A673 (cell line): ENCODE measurements at regions of chr15 and their contacts with region 1.

Region 1: DNA sequence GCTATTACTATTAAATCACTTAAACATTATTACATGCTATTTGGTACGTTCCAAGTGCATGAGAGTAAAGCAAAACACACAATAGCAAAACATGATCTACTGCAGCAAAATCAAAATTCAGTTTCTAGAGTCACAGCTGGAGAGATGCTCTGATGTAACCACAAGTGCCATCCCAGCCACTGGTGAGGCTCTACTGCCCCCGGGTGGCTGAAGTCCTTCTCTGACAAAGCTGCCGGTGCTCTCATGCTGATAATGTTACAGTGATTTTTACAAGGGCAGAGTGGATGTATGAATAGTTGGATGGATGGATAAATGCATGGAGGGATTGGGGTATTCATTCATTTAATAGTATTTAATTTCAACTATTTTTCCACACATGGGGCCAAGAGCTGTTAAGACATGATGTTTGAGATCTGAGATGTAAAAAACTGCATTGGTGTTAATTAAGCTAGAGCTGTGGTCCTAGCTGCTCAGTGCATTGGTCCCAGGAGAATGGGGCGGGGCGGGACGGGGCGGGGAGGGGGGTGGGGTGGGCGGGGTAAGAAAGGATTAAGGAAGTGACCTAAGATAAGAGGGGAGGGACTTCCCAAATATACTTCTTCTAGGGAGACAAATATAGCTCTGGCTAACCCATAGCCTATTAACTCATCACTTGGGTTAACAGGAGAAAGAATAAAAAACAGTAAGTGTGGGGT is 5.3 kb upstream of the SPESP1 start:
- DNase-seq: peak; percentile 90
- H3K4me3 ChIP-seq: no peak overlapping the region
- H3K27ac ChIP-seq: no peak overlapping the region
- H3K4me1 ChIP-seq: no peaks in the 10 kb centered on the region
- H3K27me3 ChIP-seq: no peaks in the 10 kb centered on the region
- CTCF ChIP-seq: peak; percentile 97

Region 2: GRCh38 chr15:68559345-68560310 is 365.4 kb before region 1 on chr15:
- CTCF ChIA-PET with region 1: interaction called, 3 read pairs
- POLR2A ChIA-PET with region 1: no interaction called
- intact Hi-C with region 1: loop called (anchors 2 kb)
- DNase-seq: peak; percentile 93
- H3K4me3 ChIP-seq: peak overlapping the region; percentile 43
- H3K27ac ChIP-seq: peak overlapping the region; percentile 58
- H3K4me1 ChIP-seq: peaks cover 9% of the 10 kb centered on the region
- H3K27me3 ChIP-seq: no peaks in the 10 kb centered on the region
- CTCF ChIP-seq: peak; percentile 99

Region 3: DNA sequence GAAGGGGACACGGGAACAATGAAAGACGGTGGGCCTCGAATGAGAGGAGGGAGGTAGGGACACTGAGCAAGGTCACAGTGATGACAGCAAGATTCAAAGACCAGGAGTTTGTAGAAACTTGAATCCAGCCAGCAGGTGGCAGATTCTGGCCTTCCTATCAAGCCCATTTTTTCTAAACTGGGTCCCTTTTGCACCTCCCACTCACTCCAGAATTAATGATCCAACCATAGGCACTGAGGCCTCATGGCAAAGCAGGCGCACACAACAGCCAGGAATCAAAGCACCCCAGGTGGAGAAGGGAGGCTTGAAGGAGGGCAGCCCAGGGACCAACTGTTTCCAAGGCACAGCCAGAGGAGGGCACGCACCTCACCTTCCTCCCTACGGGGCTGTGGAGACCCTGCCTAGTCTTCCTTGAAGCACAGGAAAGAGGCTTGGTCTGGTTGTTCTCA is 194.5 kb before region 1 on chr15:
- CTCF ChIA-PET with region 1: no interaction called
- POLR2A ChIA-PET with region 1: no interaction called
- intact Hi-C with region 1: loop called (anchors 5 kb)
- DNase-seq: peak; percentile 78
- H3K4me3 ChIP-seq: no peak overlapping the region
- H3K27ac ChIP-seq: no peak overlapping the region
- H3K4me1 ChIP-seq: peaks cover 9% of the 10 kb centered on the region
- H3K27me3 ChIP-seq: no peaks in the 10 kb centered on the region
- CTCF ChIP-seq: peak; percentile 67